ENCODE measurements at regions of chr4 and their contacts with region 1.

Region 1: GRCh38 chr4:150588316-150588715 is 6.4 kb downstream of the MAB21L2 start:
- DNase-seq: no peak
- H3K4me3 Mint-ChIP-seq: no peak overlapping the region
- H3K27ac Mint-ChIP-seq: no peak overlapping the region
- H3K4me1 Mint-ChIP-seq: no peaks in the 10 kb centered on the region
- H3K27me3 Mint-ChIP-seq: no peaks in the 10 kb centered on the region

Region 2: DNA sequence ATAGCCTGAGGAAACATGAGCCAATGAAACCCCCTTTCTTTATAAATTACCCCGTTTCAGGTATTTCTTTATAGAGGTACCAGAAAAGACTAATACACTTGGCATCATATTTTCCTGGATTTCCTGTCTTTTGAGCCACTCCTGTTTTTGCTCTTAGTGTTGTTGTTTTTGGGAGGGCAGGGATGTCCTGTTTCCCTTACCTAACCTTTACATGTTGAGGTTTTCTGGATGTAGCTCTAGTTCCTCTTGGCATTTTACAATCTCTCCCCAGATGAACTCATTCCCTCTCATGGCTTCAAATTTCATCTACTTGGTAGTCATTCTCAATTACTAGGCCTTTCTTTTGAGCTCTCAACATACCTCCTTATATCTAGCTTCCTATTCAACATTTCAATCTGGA is 110.4 kb before region 1 on chr4:
- intact Hi-C with region 1: loop called (anchors 1 kb)
- DNase-seq: no peak
- H3K4me3 Mint-ChIP-seq: no peak overlapping the region
- H3K27ac Mint-ChIP-seq: no peak overlapping the region
- H3K4me1 Mint-ChIP-seq: no peaks in the 10 kb centered on the region
- H3K27me3 Mint-ChIP-seq: no peaks in the 10 kb centered on the region

Measured in activated T-helper 1 cell treated with anti-CD3 and anti-CD28 coated beads, Interleukin-12 subunit alpha, Interleukin-12 subunit beta, Interleukin-2, Interleukin-4 antibody, amounts not matched to agents 30 ng/mL and 10 ng/mL and 1 ng/mL, durations not matched to agents 14 hours and 24 hours and 36 hours (primary cell).